ENCODE measurements at regions of chr12 and their contacts with region 1.

Region 1: GRCh38 chr12:95473884-95474659 is at the start of gene METAP2:
- DNase-seq: peak; percentile 98
- total RNA-seq, gene METAP2: 63.5 TPM

Region 2: DNA sequence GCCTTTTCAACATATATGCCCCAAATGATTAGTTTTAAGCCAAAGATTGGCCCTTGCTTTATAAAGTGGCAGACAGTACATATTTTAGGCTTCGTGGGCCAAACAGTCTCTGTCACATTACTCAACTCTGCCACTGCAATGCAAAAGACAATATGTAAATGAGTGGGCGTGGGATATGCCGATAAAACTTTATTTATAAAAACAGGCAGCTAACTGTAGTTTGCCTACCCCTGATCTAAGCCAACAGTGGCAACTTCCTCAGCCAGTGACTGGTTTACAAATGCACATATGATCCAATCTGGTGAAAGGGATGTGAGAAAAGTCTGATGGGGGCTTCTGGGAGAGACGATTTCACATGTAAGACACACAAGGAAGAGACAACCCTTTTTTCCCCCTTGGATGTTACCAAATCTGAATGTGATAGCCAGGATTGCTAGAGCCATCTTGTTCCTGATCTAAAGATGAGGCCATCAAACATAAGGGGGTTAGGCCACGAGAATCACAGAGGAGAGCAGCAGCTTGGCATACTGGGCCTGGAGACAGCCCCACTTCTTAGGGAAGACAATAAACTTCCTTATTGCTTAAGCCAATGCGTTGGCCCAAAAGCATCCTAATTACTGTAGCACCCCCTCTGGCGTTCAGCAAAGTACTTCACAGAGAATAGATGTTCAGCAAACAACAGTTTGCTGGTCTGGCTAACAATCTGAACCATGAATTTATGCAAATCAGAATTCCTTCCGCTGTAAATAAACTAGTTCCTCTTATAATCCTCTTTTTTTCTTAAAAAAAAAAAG is 748.5 kb before region 1 on chr12:
- intact Hi-C with region 1: no loop called
- DNase-seq: no peak

Region 3: GRCh38 chr12:95336390-95337067 is 137.5 kb before region 1 on chr12:
- intact Hi-C with region 1: loop called (anchors 5 kb)
- DNase-seq: peak; percentile 83

Region 4: GRCh38 chr12:95385246-95386035 is 88.6 kb before region 1 on chr12:
- intact Hi-C with region 1: loop called (anchors 1 kb)
- DNase-seq: no peak

Region 5: GRCh38 chr12:95440401-95440800 is 33.7 kb before region 1 on chr12:
- intact Hi-C with region 1: no loop called
- DNase-seq: no peak

Measured in cardiac septum (tissue), 1 donor.